Activated naive CD4-positive, alpha-beta T cell treated with anti-CD3 and anti-CD28 coated beads for 36 hours (primary cell): ENCODE measurements at regions of chr14 and their contacts with region 1.

Region 1: DNA sequence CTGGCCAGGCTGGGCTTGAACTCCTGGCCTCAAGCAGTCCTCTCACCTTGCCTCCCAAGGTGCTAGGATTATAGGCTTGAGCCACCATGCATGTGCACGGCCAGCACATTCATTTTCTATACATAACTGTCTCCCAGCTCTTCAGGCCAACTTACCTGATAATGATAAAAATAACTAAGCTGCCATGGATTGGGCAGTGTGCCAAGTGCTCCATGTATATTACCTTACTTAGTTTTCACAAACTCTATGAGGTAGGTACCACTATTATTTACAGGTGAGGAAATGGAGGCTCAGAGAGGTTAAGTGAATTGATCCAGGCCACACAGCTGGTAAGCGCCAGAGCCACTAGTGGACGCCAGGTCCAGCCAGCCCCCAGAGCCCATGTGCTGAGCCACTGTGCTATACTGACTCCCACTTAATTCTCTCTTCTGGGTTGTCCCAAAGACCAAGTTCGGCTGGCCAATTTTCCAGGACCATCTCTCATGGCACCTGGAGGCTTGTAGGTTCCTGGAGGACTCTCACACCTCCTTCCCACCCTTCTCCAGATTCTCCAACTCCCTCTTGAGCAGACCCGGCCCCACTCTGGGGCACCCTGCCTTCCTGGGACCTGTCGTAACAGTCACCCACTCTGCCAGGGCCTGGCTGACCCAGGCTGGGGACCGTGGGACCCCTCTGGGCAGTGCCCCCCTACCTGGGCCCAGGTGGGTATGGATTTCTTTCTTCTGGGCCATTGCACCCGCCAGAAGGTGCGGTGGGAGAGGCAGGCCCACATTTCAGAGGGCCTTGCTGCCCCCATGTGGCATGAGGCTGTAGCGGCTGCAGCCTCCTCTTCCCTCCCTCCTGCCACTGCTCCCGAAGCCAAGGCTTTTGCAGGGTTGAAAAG is 30.2 kb upstream of the CIPC start:
- DNase-seq: peak; percentile 71
- H3K4me3 Mint-ChIP-seq: no peak overlapping the region
- H3K27ac Mint-ChIP-seq: no peak overlapping the region
- H3K4me1 Mint-ChIP-seq: no peaks in the 10 kb centered on the region
- H3K27me3 Mint-ChIP-seq: peaks cover 2% of the 10 kb centered on the region

Region 2: DNA sequence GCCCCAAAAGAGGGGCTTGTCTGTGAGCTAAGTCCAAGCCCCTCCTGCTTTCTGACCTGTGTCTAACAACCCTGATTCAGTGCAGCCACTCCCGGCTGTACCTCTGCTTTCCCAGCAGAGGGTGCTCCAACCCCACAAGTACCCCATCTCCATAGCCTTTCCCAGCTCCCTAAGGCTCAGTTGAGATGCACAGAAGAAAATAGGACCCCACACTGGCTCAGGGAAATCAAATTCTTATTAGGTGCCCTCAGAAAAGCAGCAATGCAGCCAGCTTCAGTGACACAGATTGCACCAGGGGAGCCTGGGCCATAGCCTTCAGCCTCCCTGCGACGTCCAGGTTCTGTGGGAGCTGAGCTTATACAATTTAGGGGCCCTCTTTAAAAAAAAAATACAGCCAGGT is 191.8 kb before region 1 on chr14:
- CTCF ChIA-PET with region 1: interaction called, 692 read pairs
- intact Hi-C with region 1: loop called (anchors 1 kb)
- DNase-seq: peak; percentile 55
- H3K4me3 Mint-ChIP-seq: no peak overlapping the region
- H3K27ac Mint-ChIP-seq: no peak overlapping the region
- H3K4me1 Mint-ChIP-seq: no peaks in the 10 kb centered on the region
- H3K27me3 Mint-ChIP-seq: no peaks in the 10 kb centered on the region

Region 3: GRCh38 chr14:76904740-76905438 is 163.0 kb before region 1 on chr14:
- CTCF ChIA-PET with region 1: interaction called, 214 read pairs
- intact Hi-C with region 1: no loop called
- DNase-seq: peak; percentile 95
- H3K4me3 Mint-ChIP-seq: no peak overlapping the region
- H3K27ac Mint-ChIP-seq: no peak overlapping the region
- H3K4me1 Mint-ChIP-seq: peaks cover 30% of the 10 kb centered on the region
- H3K27me3 Mint-ChIP-seq: no peaks in the 10 kb centered on the region

Region 4: DNA sequence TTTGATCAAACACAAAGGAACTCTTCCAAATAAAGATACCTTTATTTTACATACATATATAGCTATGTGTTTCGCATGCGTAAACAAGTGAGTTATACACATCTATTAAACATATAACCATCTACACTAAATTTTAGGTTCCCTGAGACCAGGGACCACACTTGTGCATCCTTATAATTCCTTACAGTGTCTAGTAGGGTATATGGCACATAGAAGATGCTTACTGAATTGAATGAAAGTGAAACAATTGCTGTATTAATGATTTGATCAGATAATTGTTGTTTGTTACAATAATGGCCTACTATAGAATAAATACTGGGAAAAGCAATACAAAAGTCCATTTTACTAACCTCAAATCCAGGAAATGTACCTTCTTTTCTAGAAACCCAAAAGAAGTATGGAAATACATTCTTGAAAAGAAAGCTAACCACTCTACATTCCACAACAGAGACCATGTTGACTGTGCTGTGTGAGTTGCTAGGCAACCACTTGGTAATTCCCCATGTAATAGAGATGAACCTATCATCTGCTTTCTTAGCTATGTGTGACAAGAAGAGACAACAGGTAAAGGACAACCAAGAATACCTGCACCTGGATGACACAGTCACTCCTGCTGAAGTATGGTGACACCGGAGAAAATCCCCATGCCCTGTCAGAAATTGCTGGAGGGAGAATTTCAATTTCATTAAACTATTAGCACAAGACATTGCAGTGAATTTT is 18.3 kb after region 1 on chr14:
- CTCF ChIA-PET with region 1: interaction called, 111 read pairs
- intact Hi-C with region 1: no loop called
- DNase-seq: no peak
- H3K4me3 Mint-ChIP-seq: no peak overlapping the region
- H3K27ac Mint-ChIP-seq: no peak overlapping the region
- H3K4me1 Mint-ChIP-seq: peaks cover 4% of the 10 kb centered on the region
- H3K27me3 Mint-ChIP-seq: no peaks in the 10 kb centered on the region